ENCODE measurements at regions of chr17 and their contacts with region 1.

Region 1: GRCh38 chr17:7989781-7990655 is 12.4 kb upstream of the GUCY2D start:
- DNase-seq: peak; percentile 80 to 87 (median 86)
- H3K4me3 ChIP-seq: peak overlapping the region; percentile 35 to 78 (median 60)
- H3K27ac ChIP-seq: no peak overlapping the region
- H3K4me1 ChIP-seq: peaks cover 4 to 27% (median 16%) of the 10 kb centered on the region in 4 experiments
- H3K27me3 ChIP-seq: no peaks in the 10 kb centered on the region

Region 2: GRCh38 chr17:7915611-7916382 is 74.2 kb before region 1 on chr17 and contains the start of gene RNF227:
- CTCF ChIA-PET with region 1: interaction called, 209 read pairs
- POLR2A ChIA-PET with region 1: no interaction called
- DNase-seq: peak; percentile 93 to 96 (median 96)
- H3K4me3 ChIP-seq: peak within 1 kb of the TSS; percentile 11 to 80 (median 48)
- H3K27ac ChIP-seq: peak within 1 kb of the TSS in 1 of 2 experiments; percentile 36
- H3K4me1 ChIP-seq: peaks cover 0 to 27% (median 22%) of the 10 kb centered on the region in 4 experiments
- H3K27me3 ChIP-seq: peaks cover 0 to 3% (median 0%) of the 10 kb centered on the region in 5 experiments

Region 3: GRCh38 chr17:7931709-7932482 is 58.1 kb before region 1 on chr17 and contains the starts of genes CNTROB and TRAPPC1:
- CTCF ChIA-PET with region 1: interaction called, 35 read pairs
- POLR2A ChIA-PET with region 1: no interaction called
- DNase-seq: peak; percentile 99 to 100 (median 99)
- H3K4me3 ChIP-seq: peak within 1 kb of the TSS; percentile 50 to 98 (median 88)
- H3K27ac ChIP-seq: peak within 1 kb of the TSS; percentile 92 to 97
- H3K4me1 ChIP-seq: peaks cover 7 to 37% (median 24%) of the 10 kb centered on the region in 4 experiments
- H3K27me3 ChIP-seq: no peaks in the 10 kb centered on the region

Region 4: DNA sequence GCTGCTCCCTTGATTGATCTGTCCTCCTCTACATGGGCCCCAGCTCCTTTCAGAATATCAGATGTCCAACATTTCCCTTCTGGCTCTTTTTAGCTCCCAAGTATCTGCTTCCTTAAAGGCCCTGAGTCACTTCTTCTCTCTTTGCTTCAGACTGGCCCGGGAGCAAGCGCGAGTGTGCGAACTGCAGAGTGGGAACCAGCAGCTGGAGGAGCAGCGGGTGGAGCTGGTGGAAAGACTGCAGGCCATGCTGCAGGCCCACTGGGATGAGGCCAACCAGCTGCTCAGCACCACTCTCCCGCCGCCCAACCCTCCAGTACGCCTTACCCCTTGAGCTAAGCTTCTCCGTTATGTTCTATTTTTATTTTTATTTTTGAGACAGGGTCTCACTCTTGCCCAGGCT is 45.7 kb before region 1 on chr17:
- CTCF ChIA-PET with region 1: interaction called, 13 read pairs
- POLR2A ChIA-PET with region 1: no interaction called
- DNase-seq: no peak
- H3K4me3 ChIP-seq: no peak overlapping the region
- H3K27ac ChIP-seq: no peak overlapping the region
- H3K4me1 ChIP-seq: no peaks in the 10 kb centered on the region
- H3K27me3 ChIP-seq: no peaks in the 10 kb centered on the region

Region 5: GRCh38 chr17:8006836-8007680 is 17.0 kb after region 1 on chr17:
- CTCF ChIA-PET with region 1: interaction called, 26 read pairs
- POLR2A ChIA-PET with region 1: interaction called, 5 read pairs
- DNase-seq: no peak
- H3K4me3 ChIP-seq: no peak overlapping the region
- H3K27ac ChIP-seq: no peak overlapping the region
- H3K4me1 ChIP-seq: peaks cover 0 to 14% (median 12%) of the 10 kb centered on the region in 4 experiments
- H3K27me3 ChIP-seq: peaks cover 0 to 6% (median 0%) of the 10 kb centered on the region in 5 experiments

Region 6: GRCh38 chr17:8016632-8017478 is 26.8 kb after region 1 on chr17:
- CTCF ChIA-PET with region 1: interaction called, 17 read pairs
- POLR2A ChIA-PET with region 1: interaction called, 3 read pairs
- DNase-seq: peak in 2 of 3 donors; percentile 77 to 78
- H3K4me3 ChIP-seq: peak overlapping the region; percentile 11 to 77 (median 65)
- H3K27ac ChIP-seq: no peak overlapping the region
- H3K4me1 ChIP-seq: peaks cover 7 to 65% (median 61%) of the 10 kb centered on the region in 4 experiments
- H3K27me3 ChIP-seq: peaks cover 0 to 3% (median 0%) of the 10 kb centered on the region in 5 experiments

Measured in common myeloid progenitor, CD34-positive (primary cell).